Caco-2 (cell line): ENCODE measurements at regions of chr13 and their contacts with region 1.

Region 1: GRCh38 chr13:65240773-65241172 is 1989.4 kb downstream of the PCDH9 start:
- DNase-seq: no peak
- H3K4me3 ChIP-seq: no peak overlapping the region
- H3K4me3 Mint-ChIP-seq: no peak overlapping the region
- H3K27ac Mint-ChIP-seq: peak overlapping the region; percentile 12
- H3K4me1 ChIP-seq: peaks cover 24% of the 10 kb centered on the region
- H3K4me1 Mint-ChIP-seq: no peaks in the 10 kb centered on the region
- H3K27me3 ChIP-seq: no peaks in the 10 kb centered on the region
- H3K27me3 Mint-ChIP-seq: no peaks in the 10 kb centered on the region
- CTCF ChIP-seq: no peak

Region 2: DNA sequence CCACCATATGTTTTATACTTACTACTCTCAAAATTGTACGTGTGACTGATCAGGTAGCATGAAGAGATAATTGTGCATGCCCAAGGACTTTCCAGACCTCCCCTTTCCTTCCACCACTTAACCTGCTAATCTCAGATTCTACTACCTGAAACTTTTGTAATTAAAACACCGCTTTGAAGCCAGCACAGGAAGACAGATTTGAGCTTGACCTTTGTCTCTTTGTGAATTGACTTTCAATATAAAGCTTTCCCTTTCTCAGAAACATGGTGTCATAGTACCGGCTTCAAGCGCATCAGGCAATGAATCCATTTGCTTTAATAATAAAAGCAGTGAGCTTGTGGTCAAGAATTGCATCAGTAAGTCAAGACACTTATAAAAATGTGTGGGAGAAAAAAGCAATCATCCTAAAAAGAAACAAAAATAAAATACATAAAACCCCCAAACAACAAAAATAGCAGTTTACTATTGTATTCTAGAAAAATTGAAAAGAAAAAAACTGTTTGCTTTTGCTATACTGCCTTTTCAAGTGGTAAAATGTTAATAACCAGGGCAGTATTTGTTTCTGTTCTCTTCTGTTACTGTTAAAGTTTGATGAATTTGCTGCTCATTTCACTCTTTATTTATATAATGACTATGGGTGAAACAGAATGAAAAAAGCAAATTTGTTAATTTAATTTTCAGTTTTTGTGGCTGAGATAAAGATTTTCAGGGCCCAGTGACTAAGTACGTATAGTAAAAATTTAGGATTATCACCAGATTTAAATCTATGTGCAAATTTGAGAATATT is 85.9 kb before region 1 on chr13:
- CTCF ChIA-PET with region 1: no interaction called
- POLR2A ChIA-PET with region 1: no interaction called
- intact Hi-C with region 1: loop called (anchors 1 kb)
- DNase-seq: no peak
- H3K4me3 ChIP-seq: no peak overlapping the region
- H3K4me3 Mint-ChIP-seq: no peak overlapping the region
- H3K27ac Mint-ChIP-seq: no peak overlapping the region
- H3K4me1 ChIP-seq: no peaks in the 10 kb centered on the region
- H3K4me1 Mint-ChIP-seq: no peaks in the 10 kb centered on the region
- H3K27me3 ChIP-seq: no peaks in the 10 kb centered on the region
- H3K27me3 Mint-ChIP-seq: no peaks in the 10 kb centered on the region
- CTCF ChIP-seq: no peak